Activated CD8-positive, alpha-beta memory T cell treated with anti-CD3 and anti-CD28 coated beads, Interleukin-2, amount 10 ng/mL, durations not matched to agents 7 days and 5 days (primary cell): ENCODE measurements at regions of chr6 and their contacts with region 1.

Region 1: DNA sequence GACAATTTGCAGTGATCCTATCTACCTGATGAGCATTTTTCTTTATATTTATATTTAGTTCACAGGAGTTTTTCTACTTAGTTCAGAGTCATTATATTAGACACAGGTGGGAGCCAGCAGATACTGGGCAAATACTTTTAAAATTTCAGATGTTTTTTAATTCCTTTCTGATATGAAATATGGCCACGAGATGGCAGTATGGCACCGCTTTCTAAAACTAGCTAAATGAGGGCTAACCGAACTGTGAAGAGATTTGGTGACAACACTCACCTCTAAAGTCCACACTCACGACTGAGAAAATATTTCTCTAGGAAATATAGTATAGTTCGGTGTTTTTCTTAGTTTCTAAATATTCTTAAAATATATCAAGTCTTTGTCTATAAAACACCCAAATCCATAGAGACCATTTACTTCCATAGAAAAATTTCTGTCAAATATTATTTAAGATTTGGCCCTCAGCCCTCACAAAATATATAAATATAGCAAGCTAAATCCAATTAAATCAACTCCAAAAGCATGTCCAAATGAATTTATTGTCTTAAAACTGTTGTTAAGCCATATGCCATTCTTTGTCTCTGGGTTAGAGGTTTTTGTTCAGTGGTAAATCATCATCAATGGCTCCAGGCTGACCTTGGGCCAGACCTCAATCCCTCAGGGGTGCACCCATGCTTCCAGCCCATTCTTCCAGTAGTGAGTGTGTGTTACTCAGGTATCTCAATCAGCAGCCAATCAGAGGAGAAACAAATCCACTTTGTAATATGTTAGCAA is 63.6 kb downstream of the HUS1B start:
- DNase-seq: peak; percentile 77
- ATAC-seq: peak; percentile 60
- H3K4me3 Mint-ChIP-seq: no peak overlapping the region
- H3K27ac Mint-ChIP-seq: no peak overlapping the region
- H3K4me1 Mint-ChIP-seq: peaks cover 8% of the 10 kb centered on the region
- H3K27me3 Mint-ChIP-seq: no peaks in the 10 kb centered on the region

Region 2: DNA sequence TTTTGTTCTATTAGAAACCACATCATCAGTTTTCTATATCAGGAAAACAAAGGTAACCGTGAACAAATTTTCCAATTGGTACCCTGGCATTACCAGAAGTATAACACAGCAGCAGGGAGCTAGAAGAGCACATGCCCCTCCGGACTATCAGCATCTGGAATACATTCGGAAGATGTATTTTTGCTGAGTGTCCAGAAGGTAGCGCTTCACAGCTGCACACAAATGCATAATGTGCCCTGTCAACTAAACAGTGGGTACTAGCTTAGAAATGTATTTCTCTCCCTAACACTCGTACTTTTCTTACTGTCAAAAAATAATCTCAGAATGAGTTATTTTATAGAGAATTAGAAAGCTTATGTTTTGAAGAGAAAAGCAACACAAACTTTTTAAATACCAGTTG is 14.0 kb before region 1 on chr6:
- CTCF ChIA-PET with region 1: interaction called, 28 read pairs
- DNase-seq: no peak
- ATAC-seq: no peak
- H3K4me3 Mint-ChIP-seq: no peak overlapping the region
- H3K27ac Mint-ChIP-seq: no peak overlapping the region
- H3K4me1 Mint-ChIP-seq: peaks cover 38% of the 10 kb centered on the region
- H3K27me3 Mint-ChIP-seq: no peaks in the 10 kb centered on the region

Region 3: DNA sequence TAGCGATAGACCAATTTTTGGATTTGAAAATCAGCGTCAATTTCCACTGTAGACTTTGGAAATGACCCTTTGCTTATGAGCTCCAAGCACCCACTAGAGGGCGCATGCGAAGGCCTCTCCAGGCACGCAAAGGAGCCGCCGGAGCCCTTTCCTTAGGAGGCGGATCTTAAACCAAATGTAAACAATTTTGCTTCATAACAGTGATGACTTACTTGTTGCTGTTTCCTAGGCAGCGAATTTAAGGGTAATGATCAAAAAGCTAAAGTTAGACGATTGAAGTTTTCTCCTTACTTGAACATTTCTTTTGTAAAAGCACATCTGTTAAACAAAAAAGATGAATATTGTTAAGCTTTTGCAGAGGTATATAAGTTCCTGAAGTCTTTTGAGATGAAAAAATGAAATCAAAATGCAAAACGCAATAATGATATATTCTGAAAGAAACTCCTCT is 128.8 kb after region 1 on chr6:
- CTCF ChIA-PET with region 1: interaction called, 28 read pairs
- DNase-seq: peak; percentile 86
- ATAC-seq: peak; percentile 89
- H3K4me3 Mint-ChIP-seq: no peak overlapping the region
- H3K27ac Mint-ChIP-seq: no peak overlapping the region
- H3K4me1 Mint-ChIP-seq: peaks cover 8% of the 10 kb centered on the region
- H3K27me3 Mint-ChIP-seq: peaks cover 7% of the 10 kb centered on the region

Region 4: DNA sequence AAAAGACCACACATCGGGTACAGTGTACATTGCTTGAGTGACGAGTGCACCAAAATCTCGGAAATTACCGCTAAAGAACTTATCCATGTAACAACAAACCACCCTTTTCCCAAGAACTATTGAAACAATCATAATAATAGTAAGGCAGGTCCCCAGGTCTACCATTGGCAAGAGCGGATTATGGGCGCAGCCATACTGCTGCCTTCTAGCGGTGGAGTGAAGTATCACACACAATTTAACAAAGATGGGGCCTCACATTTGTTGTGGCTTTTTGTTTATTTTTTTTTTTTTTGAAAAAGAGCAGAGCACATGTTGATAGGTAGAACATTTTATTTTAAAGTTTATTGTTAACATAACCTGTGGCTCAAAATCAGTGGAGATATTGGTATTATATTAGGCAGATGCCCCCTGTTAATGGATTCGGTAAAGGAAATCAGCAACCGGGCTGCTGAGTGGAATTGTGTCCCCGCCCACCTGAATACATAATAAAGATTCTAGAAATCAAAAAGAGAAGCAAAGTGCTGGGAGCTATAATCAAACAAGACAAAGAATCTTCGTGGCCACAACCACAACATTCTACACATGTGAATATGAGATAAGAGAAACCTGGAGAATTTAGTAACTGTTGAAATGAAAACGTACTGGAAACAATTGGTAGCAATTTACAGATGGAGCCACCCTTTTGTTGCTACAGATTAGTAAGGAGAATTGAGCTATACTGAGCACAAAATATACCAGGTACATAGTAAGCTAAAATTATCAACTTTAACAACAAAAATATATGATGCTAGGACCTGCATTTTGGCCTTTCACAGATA is 193.8 kb after region 1 on chr6:
- CTCF ChIA-PET with region 1: interaction called, 10 read pairs
- DNase-seq: no peak
- ATAC-seq: no peak
- H3K4me3 Mint-ChIP-seq: no peak overlapping the region
- H3K27ac Mint-ChIP-seq: no peak overlapping the region
- H3K4me1 Mint-ChIP-seq: peaks cover 17% of the 10 kb centered on the region
- H3K27me3 Mint-ChIP-seq: peaks cover 31% of the 10 kb centered on the region

Region 5: DNA sequence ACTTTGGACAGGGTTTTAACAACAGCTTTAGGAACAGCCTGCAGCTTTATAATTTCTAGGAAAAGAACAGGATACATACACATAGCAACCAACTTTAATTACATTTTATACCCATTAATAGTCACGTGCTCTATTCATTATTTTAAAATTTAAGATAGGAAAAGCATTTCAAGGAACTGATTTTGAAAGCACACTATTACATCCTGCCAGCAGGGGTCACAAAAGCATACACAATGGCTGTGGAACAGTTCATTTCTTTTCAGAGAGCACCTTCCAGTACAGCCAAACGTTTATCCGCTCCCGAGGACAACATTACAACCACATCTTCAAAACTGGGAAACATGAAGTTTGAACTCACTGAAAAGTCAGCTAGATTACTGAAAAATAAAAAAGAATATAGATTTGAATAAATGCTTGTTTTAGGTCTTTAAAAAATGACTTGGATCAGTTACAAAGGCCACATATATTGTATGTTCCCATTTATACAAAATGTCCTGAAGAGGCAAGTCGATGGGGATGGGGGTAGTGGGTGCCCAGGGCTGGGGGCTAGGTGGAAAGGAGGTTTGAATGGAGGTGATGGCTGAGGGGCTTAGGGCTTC is 204.3 kb after region 1 on chr6:
- CTCF ChIA-PET with region 1: interaction called, 11 read pairs
- DNase-seq: no peak
- ATAC-seq: peak; percentile 60
- H3K4me3 Mint-ChIP-seq: no peak overlapping the region
- H3K27ac Mint-ChIP-seq: no peak overlapping the region
- H3K4me1 Mint-ChIP-seq: no peaks in the 10 kb centered on the region
- H3K27me3 Mint-ChIP-seq: peaks cover 78% of the 10 kb centered on the region